PC-9 (cell line): ENCODE measurements at regions of chr5 and their contacts with region 1.

Region 1: DNA sequence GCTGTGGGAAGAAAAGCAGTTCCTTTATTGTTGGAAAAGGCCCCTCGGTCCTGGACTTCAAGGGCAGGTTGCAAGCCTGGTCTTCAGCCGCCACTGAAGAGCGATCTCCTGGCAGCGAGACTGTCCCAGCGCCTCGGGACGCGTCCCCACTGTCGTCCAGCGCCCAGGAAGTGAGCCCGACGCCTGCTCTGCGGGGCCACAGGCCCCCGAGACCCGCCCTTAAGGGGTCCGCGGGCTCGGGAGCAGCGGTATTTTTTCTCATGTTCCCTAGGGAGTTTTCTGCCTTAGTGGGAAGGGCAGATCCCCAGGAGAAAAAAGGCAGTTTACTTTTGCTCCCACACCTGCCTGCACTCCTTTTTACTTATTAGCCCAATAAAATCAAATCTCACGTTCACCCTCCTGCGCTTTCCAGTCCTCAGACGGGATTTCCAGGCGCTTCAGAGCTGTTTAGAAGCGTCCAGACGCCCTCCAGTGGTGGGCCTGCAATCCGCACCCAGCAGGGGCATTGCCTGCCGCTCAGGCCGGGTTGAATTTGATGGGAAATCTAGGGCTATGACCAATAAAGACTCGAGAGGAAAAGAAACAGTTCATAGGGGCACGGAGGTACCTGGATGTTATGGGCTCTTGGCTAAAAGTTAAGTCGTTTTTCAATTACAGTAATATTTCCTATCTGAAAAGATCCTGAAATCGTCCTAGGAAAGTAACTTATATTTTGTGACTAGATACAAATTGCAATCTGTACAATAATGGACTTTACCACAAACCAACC is 2.8 kb upstream of the EFNA5 start:
- DNase-seq: peak; percentile 84 to 88
- H3K4me3 ChIP-seq: peak overlapping the region; percentile 72
- H3K27ac ChIP-seq: peak overlapping the region; percentile 90
- H3K4me1 ChIP-seq: peaks cover 17% of the 10 kb centered on the region
- H3K27me3 ChIP-seq: no peaks in the 10 kb centered on the region
- CTCF ChIP-seq: peak; percentile 95

Region 2: DNA sequence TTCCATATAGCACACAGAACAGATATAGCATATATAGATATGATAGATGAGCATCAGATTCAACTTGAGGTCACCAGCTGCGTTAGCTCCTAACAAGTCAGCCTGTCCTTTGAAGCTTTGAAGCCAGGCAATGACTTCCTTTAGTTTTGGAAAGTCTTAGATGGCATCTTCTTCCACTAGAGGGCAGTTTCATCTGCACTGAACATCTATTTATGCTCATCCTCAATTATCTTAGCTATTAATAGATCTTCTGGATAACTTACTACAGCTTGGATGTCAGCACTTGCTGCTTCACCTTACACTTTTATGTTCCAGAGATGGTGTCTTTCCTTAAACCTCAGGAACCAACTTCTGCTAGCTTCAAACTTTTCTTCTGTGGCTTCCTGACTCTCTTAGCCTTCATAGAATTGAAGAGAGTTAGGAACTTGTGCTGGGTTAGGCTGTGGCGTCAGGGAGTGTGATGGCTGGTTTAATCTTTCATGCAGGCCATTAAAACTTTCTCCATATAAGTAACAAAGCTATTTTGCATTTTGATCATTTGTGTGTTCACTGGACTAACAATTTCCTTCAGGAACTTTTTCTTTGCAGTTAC is 1404.2 kb before region 1 on chr5:
- CTCF ChIA-PET with region 1: no interaction called
- POLR2A ChIA-PET with region 1: interaction called, 7 read pairs
- intact Hi-C with region 1: loop called (anchors 1 kb)
- DNase-seq: no peak
- H3K4me3 ChIP-seq: no peak overlapping the region
- H3K27ac ChIP-seq: no peak overlapping the region
- H3K4me1 ChIP-seq: no peaks in the 10 kb centered on the region
- H3K27me3 ChIP-seq: no peaks in the 10 kb centered on the region
- CTCF ChIP-seq: peak; percentile 66

Region 3: DNA sequence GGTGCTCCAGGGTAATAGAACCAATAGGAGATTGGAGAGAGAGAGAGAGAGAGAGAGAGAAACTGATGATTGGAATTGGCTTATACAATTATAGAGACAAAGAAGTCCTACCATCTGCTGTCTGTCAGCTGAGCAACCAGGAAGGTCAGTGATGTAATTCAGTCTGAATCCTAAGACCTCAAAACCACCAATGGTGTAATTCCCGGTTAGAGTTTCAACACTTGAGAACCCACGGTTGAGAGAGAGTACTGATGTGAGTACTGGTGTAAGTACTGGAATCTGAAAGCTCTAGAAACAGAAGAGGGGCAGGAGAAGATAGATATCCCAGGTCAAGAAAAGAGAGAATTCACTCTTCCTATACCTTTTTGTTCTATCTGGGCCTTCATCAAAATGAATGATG is 778.6 kb before region 1 on chr5:
- CTCF ChIA-PET with region 1: interaction called, 17 read pairs
- POLR2A ChIA-PET with region 1: no interaction called
- intact Hi-C with region 1: no loop called
- DNase-seq: no peak
- H3K4me3 ChIP-seq: no peak overlapping the region
- H3K27ac ChIP-seq: no peak overlapping the region
- H3K4me1 ChIP-seq: no peaks in the 10 kb centered on the region
- H3K27me3 ChIP-seq: no peaks in the 10 kb centered on the region
- CTCF ChIP-seq: no peak

Region 4: DNA sequence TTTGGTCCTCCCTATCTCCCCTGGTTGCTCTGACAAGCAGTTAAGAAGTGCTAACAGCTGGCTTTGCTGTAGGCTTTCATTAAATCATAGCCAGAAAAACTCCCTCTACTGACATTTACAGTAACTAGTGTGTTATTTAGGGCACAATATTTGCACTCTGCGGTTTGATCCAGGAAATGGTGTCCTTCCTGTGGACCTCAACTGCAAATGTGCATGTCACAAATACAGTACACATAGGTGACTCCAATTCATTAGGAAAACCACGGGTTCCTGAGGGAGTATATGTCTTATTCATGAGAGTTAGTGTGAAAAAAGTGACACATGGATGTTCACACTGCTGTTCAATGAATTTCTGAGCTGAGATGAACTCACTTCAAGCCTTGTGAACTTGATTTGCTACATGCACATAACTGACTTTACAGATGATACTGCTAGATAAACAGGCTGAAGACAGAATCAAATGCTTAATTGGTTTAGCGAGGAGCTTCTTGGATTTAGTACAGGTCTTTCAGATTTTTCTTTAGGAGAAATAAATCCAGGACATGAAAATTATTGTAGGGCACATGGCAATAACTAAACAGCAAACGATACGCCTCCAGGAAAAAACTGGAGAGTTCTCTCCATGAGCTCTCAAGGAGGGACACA is 284.3 kb before region 1 on chr5:
- CTCF ChIA-PET with region 1: no interaction called
- POLR2A ChIA-PET with region 1: no interaction called
- intact Hi-C with region 1: loop called (anchors 1 kb)
- DNase-seq: peak; percentile 41 to 97
- H3K4me3 ChIP-seq: peak overlapping the region; percentile 2; the same call in 1 of the 2 replicates
- H3K27ac ChIP-seq: peak overlapping the region; percentile 94
- H3K4me1 ChIP-seq: peaks cover 49% of the 10 kb centered on the region
- H3K27me3 ChIP-seq: no peaks in the 10 kb centered on the region
- CTCF ChIP-seq: no peak

Region 5: DNA sequence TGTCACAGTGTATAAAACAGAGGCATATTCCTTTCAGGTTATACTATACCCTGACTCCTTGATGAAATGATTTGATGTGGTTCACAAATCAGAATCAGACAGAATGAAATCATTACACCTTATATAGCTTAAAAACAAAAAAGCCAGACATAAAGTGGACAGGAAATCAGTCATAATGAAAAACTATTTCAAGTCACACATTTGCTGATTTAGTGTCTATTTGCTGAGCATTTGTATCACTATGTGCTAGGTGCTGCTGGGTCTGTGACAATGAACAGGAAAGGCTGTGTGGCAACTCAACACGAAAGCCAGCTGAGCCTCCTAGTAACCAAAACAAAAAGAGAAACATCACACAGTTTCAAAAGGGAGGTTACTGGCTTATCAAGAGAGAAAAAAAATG is 196.8 kb before region 1 on chr5:
- CTCF ChIA-PET with region 1: no interaction called
- POLR2A ChIA-PET with region 1: interaction called, 18 read pairs
- intact Hi-C with region 1: no loop called
- DNase-seq: peak; percentile 33 to 85
- H3K4me3 ChIP-seq: no peak overlapping the region
- H3K27ac ChIP-seq: peak overlapping the region; percentile 90
- H3K4me1 ChIP-seq: peaks cover 77% of the 10 kb centered on the region
- H3K27me3 ChIP-seq: no peaks in the 10 kb centered on the region
- CTCF ChIP-seq: no peak

Region 6: DNA sequence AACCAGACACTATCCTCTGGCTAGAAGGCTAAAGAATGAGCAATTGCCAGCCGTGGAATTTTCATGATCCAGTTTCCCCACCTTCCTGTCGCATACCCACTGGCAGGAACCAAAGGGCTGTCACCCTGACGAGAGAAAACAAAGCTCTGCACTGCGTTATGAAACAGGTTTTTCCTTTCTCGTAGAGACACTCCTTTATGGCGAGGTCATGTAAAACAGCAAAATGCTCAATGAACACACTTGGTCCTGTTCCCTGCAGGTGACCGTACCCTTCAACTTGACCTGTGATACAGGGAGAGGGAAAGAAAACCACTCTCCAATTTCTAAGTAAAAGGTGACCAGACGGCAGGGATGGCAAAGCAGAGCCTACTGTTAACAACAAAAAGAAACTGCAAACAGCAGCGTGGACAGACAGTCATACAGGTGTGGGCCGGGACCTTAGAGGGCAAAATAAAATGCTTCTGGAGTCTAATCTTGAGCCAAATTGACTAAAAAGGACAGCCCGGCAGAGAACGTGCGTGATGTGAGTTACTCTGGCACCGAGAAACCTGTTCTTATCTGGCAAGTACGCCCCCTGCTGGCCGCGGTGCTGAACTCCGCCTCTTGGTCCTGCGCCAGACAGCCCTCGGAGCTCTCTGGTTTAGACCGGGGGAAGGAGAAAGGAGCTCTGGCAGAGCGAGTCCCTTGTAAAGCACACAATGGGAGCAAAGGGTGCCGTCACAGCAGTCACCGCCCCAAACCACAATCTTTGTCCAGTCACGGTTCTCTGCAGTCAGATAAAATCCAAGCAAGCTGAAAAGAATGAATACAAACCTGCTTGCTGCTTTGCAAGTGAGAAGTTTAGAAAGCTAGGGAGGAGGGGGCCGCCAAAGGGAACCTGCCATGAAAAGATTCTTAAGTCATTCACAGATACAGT is 101.7 kb before region 1 on chr5:
- CTCF ChIA-PET with region 1: interaction called, 13 read pairs
- POLR2A ChIA-PET with region 1: interaction called, 35 read pairs
- intact Hi-C with region 1: loop called (anchors 1 kb)
- DNase-seq: peak; percentile 98 to 99
- H3K4me3 ChIP-seq: peak overlapping the region; percentile 56
- H3K27ac ChIP-seq: peak overlapping the region; percentile 100
- H3K4me1 ChIP-seq: peaks cover 82% of the 10 kb centered on the region
- H3K27me3 ChIP-seq: no peaks in the 10 kb centered on the region
- CTCF ChIP-seq: peak; percentile 95

Region 7: DNA sequence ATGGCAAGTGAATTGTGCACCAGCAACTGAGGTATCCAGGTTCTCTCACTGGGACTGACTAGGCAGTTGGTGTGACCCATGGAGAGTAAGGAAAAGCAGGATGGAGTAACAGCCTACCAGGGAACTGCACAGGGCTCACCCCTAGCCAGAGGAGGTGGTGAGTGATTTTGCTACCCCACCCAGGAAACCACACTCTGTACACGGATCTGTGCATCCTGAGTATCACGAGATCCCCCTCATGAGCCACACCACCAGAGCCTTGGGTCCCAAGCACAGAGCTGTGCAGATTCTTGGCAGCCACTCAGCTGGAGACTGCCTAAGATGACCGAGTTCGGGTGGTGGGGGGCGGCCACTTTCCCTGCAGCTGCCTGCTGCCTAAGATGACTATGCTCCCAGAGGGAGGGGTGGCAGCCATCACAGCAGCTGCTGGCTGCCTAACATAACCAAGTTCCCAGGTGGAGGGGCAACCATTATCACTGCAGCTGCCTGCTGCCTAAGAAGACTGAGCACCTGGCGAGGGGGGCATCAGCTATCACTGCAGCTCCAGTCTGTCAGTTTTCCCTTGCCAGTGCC is 45.6 kb after region 1 on chr5:
- CTCF ChIA-PET with region 1: no interaction called
- POLR2A ChIA-PET with region 1: no interaction called
- intact Hi-C with region 1: no loop called
- DNase-seq: no peak
- H3K4me3 ChIP-seq: no peak overlapping the region
- H3K27ac ChIP-seq: no peak overlapping the region
- H3K4me1 ChIP-seq: no peaks in the 10 kb centered on the region
- H3K27me3 ChIP-seq: no peaks in the 10 kb centered on the region
- CTCF ChIP-seq: no peak